Body of pancreas (tissue), 4 donors: ENCODE measurements at regions of chr9 and their contacts with region 1.

Region 1: GRCh38 chr9:77456829-77457437 is 191.2 kb downstream of the GNA14 start:
- DNase-seq: peak; percentile 90 to 95 (median 90)
- ATAC-seq: peak; percentile 92
- H3K4me3 ChIP-seq: no peak overlapping the region
- H3K27ac ChIP-seq: no peak overlapping the region
- H3K4me1 ChIP-seq: peaks cover 6% of the 10 kb centered on the region
- H3K27me3 ChIP-seq: no peaks in the 10 kb centered on the region
- CTCF ChIP-seq: peak; percentile 80 to 93 (median 86)
- POLR2A ChIP-seq: no peak

Region 2: DNA sequence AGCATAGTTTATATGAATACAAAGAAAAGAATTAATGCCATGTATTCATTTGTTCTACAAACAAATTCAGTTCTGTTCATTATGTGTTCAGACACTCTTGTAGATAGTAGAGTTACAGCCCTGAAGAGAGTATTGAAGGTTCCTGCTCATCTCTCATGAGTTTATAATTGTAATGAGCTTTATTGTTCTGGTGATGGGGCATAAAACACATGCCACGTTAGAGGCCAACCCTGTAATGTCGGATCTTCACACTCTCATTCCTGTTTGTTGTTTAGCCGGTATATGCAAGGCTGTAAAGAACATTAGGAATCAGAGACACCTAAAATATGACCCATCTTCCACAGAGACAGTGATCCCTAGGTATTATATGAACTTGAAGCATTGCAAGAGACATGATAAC is 65.1 kb before region 1 on chr9:
- intact Hi-C with region 1: no loop called
- DNase-seq: no peak
- ATAC-seq: no peak
- H3K4me3 ChIP-seq: no peak overlapping the region
- H3K27ac ChIP-seq: no peak overlapping the region
- H3K4me1 ChIP-seq: no peaks in the 10 kb centered on the region
- H3K27me3 ChIP-seq: no peaks in the 10 kb centered on the region
- CTCF ChIP-seq: no peak
- POLR2A ChIP-seq: no peak

Region 3: GRCh38 chr9:77402286-77402685 is 54.6 kb before region 1 on chr9:
- intact Hi-C with region 1: no loop called
- DNase-seq: no peak
- ATAC-seq: no peak
- H3K4me3 ChIP-seq: no peak overlapping the region
- H3K27ac ChIP-seq: no peak overlapping the region
- H3K4me1 ChIP-seq: no peaks in the 10 kb centered on the region
- H3K27me3 ChIP-seq: no peaks in the 10 kb centered on the region
- CTCF ChIP-seq: no peak
- POLR2A ChIP-seq: no peak

Region 4: GRCh38 chr9:77605449-77606220 is 148.7 kb after region 1 on chr9:
- intact Hi-C with region 1: no loop called
- DNase-seq: no peak
- ATAC-seq: no peak
- H3K4me3 ChIP-seq: no peak overlapping the region
- H3K27ac ChIP-seq: peak overlapping the region in 2 of 4 donors; percentile 52 to 59
- H3K4me1 ChIP-seq: no peaks in the 10 kb centered on the region
- H3K27me3 ChIP-seq: no peaks in the 10 kb centered on the region
- CTCF ChIP-seq: no peak
- POLR2A ChIP-seq: no peak

Region 5: GRCh38 chr9:77751341-77752091 is 294.6 kb after region 1 on chr9:
- intact Hi-C with region 1: loop called (anchors 10 kb)
- DNase-seq: peak in 1 of 4 donors; percentile 43
- ATAC-seq: peak; percentile 68
- H3K4me3 ChIP-seq: no peak overlapping the region
- H3K27ac ChIP-seq: no peak overlapping the region
- H3K4me1 ChIP-seq: peaks cover 6% of the 10 kb centered on the region
- H3K27me3 ChIP-seq: no peaks in the 10 kb centered on the region
- CTCF ChIP-seq: peak; percentile 25 to 64 (median 49)
- POLR2A ChIP-seq: no peak

Region 6: GRCh38 chr9:77899679-77900354 is 442.9 kb after region 1 on chr9:
- intact Hi-C with region 1: no loop called
- DNase-seq: no peak
- ATAC-seq: no peak
- H3K4me3 ChIP-seq: no peak overlapping the region
- H3K27ac ChIP-seq: no peak overlapping the region
- H3K4me1 ChIP-seq: peaks cover 5% of the 10 kb centered on the region
- H3K27me3 ChIP-seq: no peaks in the 10 kb centered on the region
- CTCF ChIP-seq: no peak
- POLR2A ChIP-seq: no peak